Dorsolateral prefrontal cortex (tissue), 120 donors: ENCODE measurements at regions of chr18 and their contacts with region 1.

Region 1: GRCh38 chr18:63161761-63162195 is 157.8 kb downstream of the BCL2 start:
- DNase-seq: peak in 7 of 10 donors; percentile 55 to 88 (median 69)
- H3K4me3 ChIP-seq: peak overlapping the region in 1 of 59 donors; percentile 17
- H3K27ac ChIP-seq: peak overlapping the region in 47 of 59 donors; percentile 5 to 83 (median 54)
- H3K27me3 ChIP-seq: no peaks in the 10 kb centered on the region
- CTCF ChIP-seq: no peak

Region 2: DNA sequence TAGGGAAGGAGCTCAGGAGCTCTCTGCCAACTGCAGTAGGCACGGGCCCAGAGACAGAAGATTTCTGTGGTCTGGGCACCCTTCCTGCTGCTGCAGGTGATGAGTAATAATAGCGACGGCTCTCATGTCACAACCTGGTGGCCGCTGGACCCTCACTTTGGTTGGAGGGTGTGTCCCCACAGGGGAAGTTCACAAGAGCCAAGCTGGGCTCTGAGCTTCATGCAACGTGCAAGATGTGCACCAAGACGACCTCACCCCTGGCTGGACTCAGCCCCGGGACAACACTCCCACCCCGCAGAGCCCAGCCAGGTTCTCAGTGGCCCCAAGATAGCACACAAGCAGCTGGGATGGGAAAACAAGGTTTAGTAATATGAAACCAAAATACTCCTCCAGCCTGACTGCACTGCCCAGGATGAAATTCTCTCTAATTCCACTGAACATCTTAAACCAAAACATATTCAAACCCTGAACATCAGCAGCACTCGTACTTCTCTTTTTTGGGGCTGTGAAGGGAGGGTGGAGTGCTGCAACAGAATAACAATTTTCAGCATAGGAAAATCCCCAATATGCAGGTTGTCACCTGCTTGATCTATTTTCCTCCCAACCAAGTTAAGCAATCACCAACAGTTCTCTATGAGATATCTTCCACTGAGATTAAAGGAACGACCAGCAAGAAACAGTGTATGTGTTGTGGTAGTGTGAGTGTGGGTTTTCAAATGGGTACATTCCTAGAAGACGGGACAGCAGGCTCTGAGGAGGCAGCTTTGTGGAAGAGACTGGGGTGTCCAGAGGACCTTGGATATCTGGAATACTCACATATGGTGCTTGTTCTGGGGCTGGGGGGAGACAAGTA is 131.3 kb after region 1 on chr18:
- intact Hi-C with region 1: loop called in 1 of 2 experiments (anchors 5 kb)
- DNase-seq: no peak
- H3K4me3 ChIP-seq: peak overlapping the region in 1 of 59 donors; percentile 10
- H3K27ac ChIP-seq: peak overlapping the region in 43 of 59 donors; percentile 3 to 76 (median 42)
- H3K27me3 ChIP-seq: no peaks in the 10 kb centered on the region
- CTCF ChIP-seq: no peak

Region 3: GRCh38 chr18:63317982-63318881 is 156.5 kb after region 1 on chr18:
- intact Hi-C with region 1: no loop called
- DNase-seq: peak in 9 of 10 donors; percentile 44 to 80 (median 64)
- H3K4me3 ChIP-seq: peak overlapping the region; percentile 44 to 94 (median 82)
- H3K27ac ChIP-seq: peak overlapping the region in 57 of 59 donors; percentile 7 to 93 (median 82)
- H3K27me3 ChIP-seq: no peaks in the 10 kb centered on the region
- CTCF ChIP-seq: peak in 55 of 56 donors; percentile 26 to 87 (median 68)